ENCODE measurements at regions of chr12 and their contacts with region 1.

Region 1: GRCh38 chr12:94149119-94149780 is 873 bp downstream of the PLXNC1 start:
- DNase-seq: peak; percentile 87
- ATAC-seq: peak; percentile 36
- H3K4me3 ChIP-seq: peak overlapping the region; percentile 30 to 80 (median 74)
- H3K4me3 Mint-ChIP-seq: peak overlapping the region; percentile 99
- H3K27ac ChIP-seq: peak overlapping the region in 1 of 2 donors; percentile 26
- H3K27ac Mint-ChIP-seq: peak overlapping the region; percentile 84
- H3K4me1 ChIP-seq: peaks cover 25 to 43% of the 10 kb centered on the region in 2 donors
- H3K4me1 Mint-ChIP-seq: peaks cover 63% of the 10 kb centered on the region
- H3K27me3 ChIP-seq: no peaks in the 10 kb centered on the region
- H3K27me3 Mint-ChIP-seq: no peaks in the 10 kb centered on the region
- CTCF ChIP-seq: peak; percentile 67

Region 2: DNA sequence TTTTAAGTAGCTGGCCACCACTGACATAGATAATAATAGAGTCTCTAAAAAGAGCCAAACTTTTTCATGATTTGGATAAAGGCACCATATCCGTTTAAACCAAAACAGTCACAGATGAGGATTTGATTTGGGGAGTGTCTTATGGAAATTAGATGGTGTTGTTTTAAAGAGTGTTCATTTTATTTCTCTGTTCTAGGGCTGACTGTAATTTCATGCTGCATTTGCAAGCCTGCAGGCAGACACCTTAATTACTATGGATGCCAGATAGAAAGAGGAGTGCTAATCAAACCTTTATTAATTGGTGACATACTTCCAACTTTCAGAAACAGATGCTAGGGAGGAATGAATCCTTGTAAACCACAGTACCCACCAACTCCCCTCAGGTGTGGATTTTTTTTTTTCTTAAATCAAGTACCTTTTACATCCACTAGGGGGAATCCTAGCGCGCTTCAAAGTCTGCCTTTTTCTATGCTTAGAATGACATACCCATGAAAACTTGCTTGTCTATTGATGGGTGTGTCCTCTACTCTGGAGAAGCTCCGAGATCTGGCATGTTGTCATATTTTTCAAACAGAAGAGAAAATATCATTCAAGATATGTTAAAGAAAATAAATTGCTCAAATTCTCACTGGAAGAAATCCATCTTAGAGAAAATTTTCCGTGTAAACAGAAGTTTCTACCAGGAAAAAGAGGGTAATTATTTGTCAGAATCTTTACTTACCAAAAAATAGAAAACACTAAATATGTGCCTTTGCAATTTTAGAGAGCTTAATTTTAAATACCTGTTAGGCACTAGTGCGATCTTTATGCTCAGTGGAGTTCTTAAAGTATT is 15.1 kb before region 1 on chr12:
- CTCF ChIA-PET with region 1: interaction called, 47 read pairs
- POLR2A ChIA-PET with region 1: interaction called, 6 read pairs
- intact Hi-C with region 1: loop called (anchors 1 kb)
- DNase-seq: peak; percentile 74
- ATAC-seq: peak; percentile 91
- H3K4me3 ChIP-seq: no peak overlapping the region
- H3K4me3 Mint-ChIP-seq: no peak overlapping the region
- H3K27ac ChIP-seq: no peak overlapping the region
- H3K27ac Mint-ChIP-seq: no peak overlapping the region
- H3K4me1 ChIP-seq: peaks cover 3 to 10% of the 10 kb centered on the region in 2 donors
- H3K4me1 Mint-ChIP-seq: peaks cover 10% of the 10 kb centered on the region
- H3K27me3 ChIP-seq: no peaks in the 10 kb centered on the region
- H3K27me3 Mint-ChIP-seq: peaks cover 3% of the 10 kb centered on the region
- CTCF ChIP-seq: peak; percentile 89

Region 3: GRCh38 chr12:94207849-94208621 is 58.8 kb after region 1 on chr12:
- CTCF ChIA-PET with region 1: interaction called, 6 read pairs
- POLR2A ChIA-PET with region 1: interaction called, 9 read pairs
- intact Hi-C with region 1: loop called (anchors 1 kb)
- DNase-seq: peak; percentile 89
- ATAC-seq: peak; percentile 84
- H3K4me3 ChIP-seq: peak overlapping the region; percentile 26 to 65 (median 57)
- H3K4me3 Mint-ChIP-seq: peak overlapping the region; percentile 87
- H3K27ac ChIP-seq: peak overlapping the region; percentile 93 to 96
- H3K27ac Mint-ChIP-seq: peak overlapping the region; percentile 96
- H3K4me1 ChIP-seq: peaks cover 54 to 56% of the 10 kb centered on the region in 2 donors
- H3K4me1 Mint-ChIP-seq: peaks cover 62% of the 10 kb centered on the region
- H3K27me3 ChIP-seq: no peaks in the 10 kb centered on the region
- H3K27me3 Mint-ChIP-seq: no peaks in the 10 kb centered on the region
- CTCF ChIP-seq: no peak

Region 4: GRCh38 chr12:94262228-94263010 is 113.2 kb after region 1 on chr12:
- CTCF ChIA-PET with region 1: interaction called, 4 read pairs
- POLR2A ChIA-PET with region 1: interaction called, 8 read pairs
- intact Hi-C with region 1: loop called (anchors 1 kb)
- DNase-seq: peak; percentile 86
- ATAC-seq: peak; percentile 82
- H3K4me3 ChIP-seq: peak overlapping the region; percentile 48 to 77 (median 64)
- H3K4me3 Mint-ChIP-seq: peak overlapping the region; percentile 99
- H3K27ac ChIP-seq: peak overlapping the region; percentile 81 to 90
- H3K27ac Mint-ChIP-seq: peak overlapping the region; percentile 99
- H3K4me1 ChIP-seq: peaks cover 45% of the 10 kb centered on the region in 2 donors
- H3K4me1 Mint-ChIP-seq: peaks cover 58% of the 10 kb centered on the region
- H3K27me3 ChIP-seq: no peaks in the 10 kb centered on the region
- H3K27me3 Mint-ChIP-seq: no peaks in the 10 kb centered on the region
- CTCF ChIP-seq: no peak

Region 5: DNA sequence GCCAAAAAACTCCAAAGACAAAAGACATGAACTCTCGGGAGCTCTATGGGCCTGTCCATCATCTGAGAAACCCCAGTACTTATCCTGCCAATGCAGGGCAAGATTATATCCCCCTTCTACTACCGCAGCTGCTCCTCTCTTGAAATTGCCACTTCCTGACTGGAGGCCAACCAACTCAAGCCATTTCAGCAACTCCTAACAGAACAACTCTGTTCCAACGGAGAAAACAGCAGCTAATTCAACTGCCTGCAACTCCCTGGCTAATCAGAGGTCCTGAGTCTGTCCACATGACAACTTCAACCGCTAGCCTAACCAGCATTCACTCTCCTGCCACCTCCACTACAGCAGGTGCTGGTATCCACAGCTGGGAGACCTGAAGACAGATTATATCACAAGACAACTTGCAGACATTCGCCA is 286.3 kb after region 1 on chr12:
- CTCF ChIA-PET with region 1: interaction called, 56 read pairs
- POLR2A ChIA-PET with region 1: no interaction called
- intact Hi-C with region 1: loop called (anchors 5 kb)
- DNase-seq: peak; percentile 11
- ATAC-seq: no peak
- H3K4me3 ChIP-seq: no peak overlapping the region
- H3K4me3 Mint-ChIP-seq: no peak overlapping the region
- H3K27ac ChIP-seq: no peak overlapping the region
- H3K27ac Mint-ChIP-seq: no peak overlapping the region
- H3K4me1 ChIP-seq: peaks cover 6 to 8% of the 10 kb centered on the region in 2 donors
- H3K4me1 Mint-ChIP-seq: peaks cover 11% of the 10 kb centered on the region
- H3K27me3 ChIP-seq: no peaks in the 10 kb centered on the region
- H3K27me3 Mint-ChIP-seq: no peaks in the 10 kb centered on the region
- CTCF ChIP-seq: no peak

Region 6: DNA sequence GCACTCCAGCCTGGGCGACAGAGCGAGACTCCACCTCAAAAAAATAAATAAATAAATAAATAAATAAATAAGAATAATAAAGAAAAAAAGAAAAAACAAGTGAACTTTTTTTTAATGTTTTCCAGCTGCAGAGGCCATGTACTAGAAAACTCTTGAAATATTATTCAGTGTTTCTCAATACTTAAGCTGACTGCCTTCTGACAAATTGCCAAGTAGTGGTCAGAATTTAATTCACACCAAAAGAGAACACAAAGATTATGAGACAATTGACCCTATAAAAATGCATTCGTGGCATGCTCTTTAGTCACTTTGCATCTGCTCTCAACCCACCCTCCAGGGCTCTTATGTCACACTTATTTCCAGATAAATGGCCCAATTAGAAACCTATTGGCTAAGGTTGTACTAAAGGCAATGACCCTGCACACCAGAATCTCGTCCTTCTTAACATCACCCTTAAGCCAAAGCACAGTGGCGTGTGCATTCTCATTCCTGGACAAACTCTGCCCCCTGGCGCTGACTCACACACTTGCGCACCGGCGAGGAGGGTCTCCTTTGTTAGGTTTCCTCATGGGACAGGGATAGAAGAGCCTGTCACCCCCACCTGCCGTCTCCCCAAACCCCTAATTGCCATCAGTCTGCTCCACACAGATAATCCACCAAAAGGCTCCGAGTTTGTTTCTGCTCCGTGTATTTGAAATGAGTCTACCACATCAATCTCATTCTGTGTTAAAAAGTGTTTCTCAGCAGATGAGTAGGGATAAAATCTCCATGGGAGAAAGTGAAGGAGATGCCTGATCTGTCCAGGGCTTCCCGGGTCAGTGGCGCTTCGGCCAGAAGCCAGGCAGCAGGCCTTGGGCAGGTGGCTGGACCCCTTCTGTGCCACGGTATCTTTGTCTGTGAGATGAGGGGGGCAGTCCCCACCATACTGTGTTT is 383.5 kb after region 1 on chr12:
- CTCF ChIA-PET with region 1: interaction called, 6 read pairs
- POLR2A ChIA-PET with region 1: no interaction called
- intact Hi-C with region 1: loop called (anchors 1 kb)
- DNase-seq: peak; percentile 78
- ATAC-seq: peak; percentile 81
- H3K4me3 ChIP-seq: no peak overlapping the region
- H3K4me3 Mint-ChIP-seq: no peak overlapping the region
- H3K27ac ChIP-seq: no peak overlapping the region
- H3K27ac Mint-ChIP-seq: no peak overlapping the region
- H3K4me1 ChIP-seq: no peaks in the 10 kb centered on the region
- H3K4me1 Mint-ChIP-seq: peaks cover 5% of the 10 kb centered on the region
- H3K27me3 ChIP-seq: no peaks in the 10 kb centered on the region
- H3K27me3 Mint-ChIP-seq: peaks cover 3% of the 10 kb centered on the region
- CTCF ChIP-seq: peak; percentile 81

Region 7: DNA sequence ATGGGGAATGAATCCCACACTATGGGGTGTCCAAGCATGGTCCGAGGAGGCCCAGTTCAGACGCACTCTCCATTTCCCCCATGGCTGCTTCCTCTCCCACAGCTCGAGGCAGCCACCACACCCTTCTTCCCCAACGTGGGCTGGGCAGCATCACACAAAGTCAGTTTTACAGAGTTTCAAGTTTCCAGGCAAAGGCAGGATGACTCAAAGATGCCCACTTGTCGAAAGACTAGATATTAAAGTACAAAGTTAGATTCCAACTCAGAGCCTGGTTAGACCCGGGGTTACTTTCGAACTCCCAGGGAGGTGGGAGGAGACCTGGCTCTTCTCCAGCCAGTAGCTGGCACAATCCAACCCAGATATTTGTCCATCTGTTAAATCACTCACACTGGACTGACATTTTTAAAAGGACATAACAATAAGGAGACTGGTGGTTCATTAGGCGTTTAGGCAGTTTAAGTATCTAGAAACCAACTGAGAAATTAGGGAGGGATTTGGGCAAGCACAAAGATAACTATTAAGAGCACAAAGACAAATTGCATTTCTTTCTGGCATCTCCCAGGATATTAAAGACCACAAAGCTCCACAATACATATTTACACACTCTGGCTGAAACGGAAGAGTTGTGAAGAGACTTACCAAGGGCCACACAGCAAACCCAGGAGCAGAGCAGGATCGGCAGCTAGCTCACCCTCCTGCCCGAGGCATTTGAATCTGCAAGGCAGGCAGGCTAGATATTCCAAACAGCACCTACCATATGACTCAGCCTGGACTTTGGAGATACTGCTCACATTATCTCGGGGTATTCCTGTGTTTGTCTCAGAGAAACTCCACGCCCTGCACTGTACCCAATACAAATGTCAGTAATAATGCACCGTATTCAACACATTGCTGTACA is 466.3 kb after region 1 on chr12:
- CTCF ChIA-PET with region 1: no interaction called
- POLR2A ChIA-PET with region 1: no interaction called
- intact Hi-C with region 1: no loop called
- DNase-seq: no peak
- ATAC-seq: no peak
- H3K4me3 ChIP-seq: no peak overlapping the region
- H3K4me3 Mint-ChIP-seq: no peak overlapping the region
- H3K27ac ChIP-seq: no peak overlapping the region
- H3K27ac Mint-ChIP-seq: no peak overlapping the region
- H3K4me1 ChIP-seq: no peaks in the 10 kb centered on the region
- H3K4me1 Mint-ChIP-seq: peaks cover 2% of the 10 kb centered on the region
- H3K27me3 ChIP-seq: no peaks in the 10 kb centered on the region
- H3K27me3 Mint-ChIP-seq: no peaks in the 10 kb centered on the region
- CTCF ChIP-seq: no peak